ENCODE measurements at regions of chr14 and their contacts with region 1.

Region 1: GRCh38 chr14:105448706-105449111 is 25.9 kb upstream of the CRIP2 start:
- DNase-seq: peak; percentile 67 to 87
- ATAC-seq: peak; percentile 83 to 93
- H3K4me3 ChIP-seq: no peak overlapping the region
- H3K27ac ChIP-seq: peak overlapping the region in 1 of 2 experiments; percentile 29; a peak in 3 of 6 replicates
- H3K4me1 ChIP-seq: 0 out of 3 replicates have a peak, but pooled peaks cover 6% of the 10 kb centered on the region
- CTCF ChIP-seq: peak; percentile 67
- EP300 ChIP-seq: no peak
- POLR2A ChIP-seq: no peak
- RAD21 ChIP-seq: peak; percentile 52 to 54

Region 2: DNA sequence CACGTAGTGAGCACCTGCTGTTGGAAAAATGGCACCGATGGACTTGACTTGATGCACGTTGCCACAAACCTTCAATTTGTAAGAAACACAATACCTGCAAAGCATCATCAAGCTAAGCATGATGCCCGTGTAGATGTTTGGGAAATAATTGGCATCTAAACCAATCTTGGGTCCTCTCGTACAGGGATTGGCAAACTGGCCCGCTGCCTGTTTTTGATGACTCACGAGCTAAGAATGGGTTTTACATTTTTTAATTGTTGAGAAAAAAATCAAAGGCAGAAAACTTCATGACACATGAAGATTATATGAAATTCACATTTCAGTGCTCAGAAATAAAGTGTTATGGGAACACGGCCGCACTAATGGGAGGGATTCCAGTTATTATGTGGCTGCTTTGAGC is 18.2 kb before region 1 on chr14:
- CTCF ChIA-PET with region 1: interaction called, 12 read pairs
- POLR2A ChIA-PET with region 1: no interaction called
- DNase-seq: peak in 1 of 2 experiments; percentile 36
- ATAC-seq: peak in 1 of 2 experiments; percentile 20; a peak in 1 of 6 replicates
- H3K4me3 ChIP-seq: no peak overlapping the region
- H3K27ac ChIP-seq: peak overlapping the region in 1 of 2 experiments; percentile 39; a peak in 3 of 6 replicates
- H3K4me1 ChIP-seq: peaks cover 23% of the 10 kb centered on the region
- CTCF ChIP-seq: no peak
- EP300 ChIP-seq: no peak
- POLR2A ChIP-seq: no peak
- RAD21 ChIP-seq: no peak

Region 3: GRCh38 chr14:105473677-105474482 is 25.2 kb after region 1 on chr14:
- CTCF ChIA-PET with region 1: interaction called, 34 read pairs
- POLR2A ChIA-PET with region 1: no interaction called
- DNase-seq: peak; percentile 89 to 92
- ATAC-seq: peak; percentile 59 to 83
- H3K4me3 ChIP-seq: peak overlapping the region; percentile 82
- H3K27ac ChIP-seq: peak overlapping the region; percentile 84 to 97
- H3K4me1 ChIP-seq: peaks cover 58% of the 10 kb centered on the region
- CTCF ChIP-seq: no peak
- EP300 ChIP-seq: no peak; a peak in 1 of 5 replicates
- POLR2A ChIP-seq: no peak
- RAD21 ChIP-seq: no peak

Region 4: GRCh38 chr14:105517096-105517495 is 68.4 kb after region 1 on chr14:
- CTCF ChIA-PET with region 1: no interaction called
- POLR2A ChIA-PET with region 1: no interaction called
- DNase-seq: no peak
- ATAC-seq: 0 out of 6 replicates have a peak, but pooled peaks of 1 of the 2 experiments have one; percentile 35
- H3K4me3 ChIP-seq: no peak overlapping the region
- H3K27ac ChIP-seq: no peak overlapping the region
- H3K4me1 ChIP-seq: peaks cover under 1% of the 10 kb centered on the region; the same call in 2 of the 3 replicates
- CTCF ChIP-seq: no peak
- EP300 ChIP-seq: no peak
- POLR2A ChIP-seq: no peak
- RAD21 ChIP-seq: no peak

Measured in A549 (cell line).